Activated T-helper 2 cell treated with anti-CD3 and anti-CD28 coated beads, Interferon-gamma antibody, Interleukin-2, Interleukin-4, amounts not matched to agents 10 μg/mL and 5 μg/mL and 100 μg/mL, durations not matched to agents 14 hours and 24 hours and 36 hours (primary cell): ENCODE measurements at regions of chr1 and their contacts with region 1.

Region 1: DNA sequence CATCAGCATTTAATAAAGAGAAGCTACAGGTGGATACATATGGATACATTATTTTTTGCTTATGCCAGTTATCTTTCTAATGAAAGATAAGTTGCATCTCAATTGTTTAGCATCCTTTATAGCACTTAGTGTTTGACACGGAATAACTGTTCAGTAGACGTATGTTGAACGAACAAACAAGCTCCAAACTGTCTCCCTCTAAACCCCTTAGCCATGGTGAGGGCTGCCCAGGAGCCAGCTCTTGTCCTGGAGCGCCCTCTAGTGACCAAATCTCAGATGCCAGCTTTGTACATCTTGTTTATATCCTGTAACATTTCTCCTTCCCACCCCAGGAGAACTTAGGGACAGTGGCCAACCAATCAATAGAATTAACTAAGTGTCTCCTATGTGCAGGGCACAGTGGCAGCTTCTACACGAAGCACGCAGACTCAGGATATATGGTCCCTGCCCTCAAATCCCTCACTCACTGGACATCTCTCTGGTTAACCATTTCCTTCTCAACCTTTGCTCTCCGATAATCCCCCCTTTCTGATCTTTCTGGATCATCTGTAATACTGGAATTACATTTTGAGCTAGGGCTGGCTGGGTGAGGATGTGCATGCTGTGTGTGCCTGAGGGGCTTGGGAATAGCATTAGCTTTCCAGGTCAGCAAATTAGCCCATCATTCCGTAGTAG is 22.9 kb downstream of the KCNA10 start:
- DNase-seq: peak; percentile 58
- H3K4me3 Mint-ChIP-seq: no peak overlapping the region
- H3K27ac Mint-ChIP-seq: no peak overlapping the region
- H3K4me1 Mint-ChIP-seq: no peaks in the 10 kb centered on the region
- H3K27me3 Mint-ChIP-seq: peaks cover 4% of the 10 kb centered on the region

Region 2: DNA sequence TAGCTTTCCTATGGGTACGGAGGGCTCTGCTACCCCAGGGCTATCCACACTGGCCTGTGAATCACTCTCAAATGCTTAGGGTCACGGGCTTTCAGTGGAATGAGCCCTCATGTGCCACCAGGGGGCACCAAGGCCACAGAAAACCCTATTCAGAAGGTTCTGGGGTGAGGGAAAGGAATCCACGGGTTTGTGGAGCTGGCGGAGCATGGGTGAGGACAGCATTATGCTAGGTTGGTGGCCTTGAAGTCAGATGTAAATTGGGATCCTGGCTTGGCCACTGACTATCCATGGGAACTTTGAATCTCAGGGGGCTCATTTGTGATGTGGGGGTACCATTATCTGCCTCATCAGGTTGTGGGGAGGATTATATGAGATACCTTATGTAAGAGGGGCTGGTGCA is 83.5 kb before region 1 on chr1:
- intact Hi-C with region 1: loop called (anchors 1 kb)
- DNase-seq: peak; percentile 37
- H3K4me3 Mint-ChIP-seq: no peak overlapping the region
- H3K27ac Mint-ChIP-seq: no peak overlapping the region
- H3K4me1 Mint-ChIP-seq: peaks cover 11% of the 10 kb centered on the region
- H3K27me3 Mint-ChIP-seq: no peaks in the 10 kb centered on the region